ENCODE measurements at regions of chr1 and their contacts with region 1.

Region 1: GRCh38 chr1:225021037-225021436 is 91.6 kb downstream of the DNAH14 start:
- DNase-seq: no peak
- H3K4me3 ChIP-seq: no peak overlapping the region
- H3K27ac ChIP-seq: no peak overlapping the region
- H3K4me1 ChIP-seq: no peaks in the 10 kb centered on the region
- H3K27me3 ChIP-seq: no peaks in the 10 kb centered on the region
- CTCF ChIP-seq: no peak
- POLR2A ChIP-seq: no peak

Region 2: GRCh38 chr1:224906340-224906739 is 114.7 kb before region 1 on chr1:
- intact Hi-C with region 1: loop called (anchors 5 kb)
- DNase-seq: no peak
- H3K4me3 ChIP-seq: no peak overlapping the region
- H3K27ac ChIP-seq: no peak overlapping the region
- H3K4me1 ChIP-seq: no peaks in the 10 kb centered on the region
- H3K27me3 ChIP-seq: no peaks in the 10 kb centered on the region
- CTCF ChIP-seq: no peak
- POLR2A ChIP-seq: no peak

Measured in breast epithelium (tissue), 4 donors.